Posterior vena cava (tissue), 2 donors: ENCODE measurements at regions of chr6 and their contacts with region 1.

Region 1: DNA sequence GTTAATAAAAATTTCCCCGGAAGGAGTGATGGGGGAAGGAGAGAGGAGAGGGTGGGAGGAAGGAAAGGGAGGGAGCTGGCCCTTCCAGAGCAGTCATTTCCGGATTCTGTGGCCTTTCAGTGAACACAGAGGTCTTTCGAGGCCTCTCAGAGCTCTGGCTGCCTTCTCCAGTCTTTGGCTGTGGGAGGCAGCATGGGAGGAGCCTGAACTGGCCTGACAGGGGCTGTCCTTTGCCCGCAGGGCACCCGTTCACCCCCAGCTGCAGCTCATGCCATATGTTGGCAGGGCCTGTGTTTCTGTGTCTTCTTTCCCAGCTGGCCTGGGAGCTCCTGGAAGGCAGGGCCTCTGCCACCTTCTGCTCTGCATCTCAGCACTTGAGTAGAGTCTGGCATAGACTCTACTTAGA is 95.5 kb downstream of the PPP1R14C start:
- DNase-seq: no peak

Region 2: DNA sequence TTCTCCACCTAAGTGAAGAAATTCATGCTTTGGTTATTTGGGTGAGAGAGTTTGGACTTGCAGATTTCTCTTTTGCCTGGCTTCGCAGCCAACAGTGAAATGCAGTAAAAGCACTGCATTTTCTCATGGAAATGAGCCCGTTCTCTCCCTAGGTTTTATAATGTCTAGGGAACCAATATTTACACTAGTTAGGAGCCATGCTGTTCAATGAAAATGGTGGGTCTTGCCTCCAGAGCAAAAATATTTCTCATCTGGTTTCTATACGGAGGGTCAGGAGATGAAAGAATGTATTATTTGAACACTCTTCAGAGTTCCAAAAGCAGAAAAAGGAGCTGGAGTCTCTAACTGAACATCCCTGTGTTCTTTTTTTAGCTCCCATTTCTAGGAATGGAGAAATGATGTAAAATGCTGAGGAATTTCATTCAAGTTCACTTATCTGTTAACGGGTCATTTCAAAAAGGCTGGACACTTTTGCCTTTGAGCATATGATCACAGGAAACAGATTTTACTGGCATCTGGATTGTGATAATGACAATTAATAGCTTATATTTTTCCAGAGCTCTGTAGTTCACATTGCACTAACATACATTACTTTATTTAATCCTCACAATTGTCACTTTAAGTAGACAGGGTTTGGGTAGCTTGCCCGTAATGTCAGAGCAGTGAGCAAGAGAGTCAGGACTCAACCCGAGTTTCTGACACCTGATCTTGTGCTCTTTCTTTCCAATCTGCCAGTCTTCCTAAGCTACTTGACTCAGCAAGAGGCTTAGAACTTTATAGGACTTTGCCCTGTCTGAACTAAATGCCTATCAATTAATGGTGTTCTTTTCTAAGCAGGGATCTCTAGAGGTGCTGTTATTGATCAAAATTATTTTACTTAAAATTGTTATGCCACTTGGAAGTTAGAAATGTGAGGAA is 17.4 kb before region 1 on chr6:
- intact Hi-C with region 1: loop called in 1 of 2 experiments (anchors 1 kb)
- DNase-seq: no peak

Region 3: DNA sequence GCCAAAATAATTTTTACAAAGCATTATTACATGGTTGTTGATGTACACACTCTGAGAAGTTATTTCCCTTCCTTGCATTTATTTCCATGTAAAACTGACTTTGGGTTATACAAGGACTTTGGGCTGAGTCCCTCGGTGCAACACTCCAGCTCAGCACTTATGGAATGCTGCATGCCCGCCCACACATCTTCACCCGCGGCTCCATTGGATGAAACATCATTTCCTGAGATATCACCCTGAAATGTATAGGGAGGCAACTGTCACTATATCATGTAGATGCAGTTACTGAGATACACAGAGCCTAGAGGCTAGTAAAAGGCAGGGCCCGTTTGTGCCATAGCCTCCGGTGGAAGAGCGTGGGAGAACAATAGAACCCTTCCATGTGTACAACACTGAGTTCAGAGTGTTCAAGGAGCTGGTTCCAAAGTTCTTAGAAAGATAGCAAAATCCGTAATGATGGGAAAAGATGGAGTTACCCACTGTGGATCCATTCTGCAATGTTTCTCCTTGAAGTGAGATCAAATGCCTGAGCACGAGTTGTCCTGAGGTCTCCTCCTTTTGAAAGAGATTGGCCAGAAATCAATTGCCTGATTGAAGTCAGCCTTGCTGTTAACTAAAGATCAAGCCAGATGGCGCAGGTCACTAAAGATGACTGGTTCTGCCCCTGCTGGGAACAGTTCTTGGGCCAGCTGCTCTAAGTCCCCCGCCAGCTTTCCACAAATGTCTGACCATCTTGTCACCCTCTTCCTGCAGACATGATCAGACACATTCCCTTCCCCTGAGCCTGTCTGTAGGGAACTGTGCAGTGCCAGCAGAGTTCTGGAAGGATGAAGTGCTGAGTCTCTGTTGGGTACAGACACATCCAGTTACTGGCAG is 29.6 kb after region 1 on chr6:
- intact Hi-C with region 1: no loop called
- DNase-seq: no peak

Region 4: DNA sequence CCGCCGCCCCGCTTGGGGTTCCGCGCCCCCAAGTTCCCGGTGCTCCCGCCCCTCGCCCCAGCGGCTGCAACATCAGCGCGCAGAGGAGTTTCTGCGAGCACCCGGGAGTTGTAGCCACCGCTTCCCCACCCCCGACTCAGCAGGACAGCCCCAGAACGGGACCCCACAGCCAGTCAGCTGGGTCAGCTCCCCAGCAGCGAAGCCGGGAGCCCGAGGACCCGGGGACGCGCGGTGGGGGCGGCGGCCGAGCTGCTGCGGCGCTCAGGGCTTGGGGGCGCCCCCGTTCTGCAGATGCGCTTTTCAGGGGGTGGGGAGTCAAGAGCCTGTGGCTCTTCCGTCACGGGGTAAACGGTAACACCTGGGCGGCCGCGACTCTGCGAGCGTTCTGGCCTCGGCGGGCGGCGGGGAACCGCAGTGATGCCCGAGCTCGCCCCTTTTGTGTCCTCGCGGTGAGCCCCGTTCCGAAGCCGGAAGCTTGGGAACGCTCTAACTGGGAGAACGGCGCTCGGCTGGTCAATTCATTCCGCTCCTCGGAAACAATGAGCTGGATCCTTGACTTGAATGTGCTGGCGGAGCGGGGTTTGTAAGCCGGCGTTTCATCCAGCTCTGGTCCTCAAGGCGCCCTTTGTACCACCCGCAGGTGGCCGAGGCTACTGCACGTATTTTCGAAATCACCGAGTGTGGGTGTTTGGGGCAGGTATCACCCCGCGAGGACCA is 362.1 kb after region 1 on chr6:
- intact Hi-C with region 1: loop called in 1 of 2 experiments (anchors 5 kb)
- DNase-seq: peak; percentile 89